Activated naive CD4-positive, alpha-beta T cell treated with anti-CD3 and anti-CD28 coated beads for 36 hours (primary cell): ENCODE measurements at regions of chr1 and their contacts with region 1.

Region 1: GRCh38 chr1:64823691-64824476 is 79.0 kb downstream of the RAVER2 start:
- DNase-seq: peak; percentile 83
- H3K4me3 Mint-ChIP-seq: no peak overlapping the region
- H3K27ac Mint-ChIP-seq: peak overlapping the region; percentile 5
- H3K4me1 Mint-ChIP-seq: peaks cover 33% of the 10 kb centered on the region
- H3K27me3 Mint-ChIP-seq: no peaks in the 10 kb centered on the region

Region 2: DNA sequence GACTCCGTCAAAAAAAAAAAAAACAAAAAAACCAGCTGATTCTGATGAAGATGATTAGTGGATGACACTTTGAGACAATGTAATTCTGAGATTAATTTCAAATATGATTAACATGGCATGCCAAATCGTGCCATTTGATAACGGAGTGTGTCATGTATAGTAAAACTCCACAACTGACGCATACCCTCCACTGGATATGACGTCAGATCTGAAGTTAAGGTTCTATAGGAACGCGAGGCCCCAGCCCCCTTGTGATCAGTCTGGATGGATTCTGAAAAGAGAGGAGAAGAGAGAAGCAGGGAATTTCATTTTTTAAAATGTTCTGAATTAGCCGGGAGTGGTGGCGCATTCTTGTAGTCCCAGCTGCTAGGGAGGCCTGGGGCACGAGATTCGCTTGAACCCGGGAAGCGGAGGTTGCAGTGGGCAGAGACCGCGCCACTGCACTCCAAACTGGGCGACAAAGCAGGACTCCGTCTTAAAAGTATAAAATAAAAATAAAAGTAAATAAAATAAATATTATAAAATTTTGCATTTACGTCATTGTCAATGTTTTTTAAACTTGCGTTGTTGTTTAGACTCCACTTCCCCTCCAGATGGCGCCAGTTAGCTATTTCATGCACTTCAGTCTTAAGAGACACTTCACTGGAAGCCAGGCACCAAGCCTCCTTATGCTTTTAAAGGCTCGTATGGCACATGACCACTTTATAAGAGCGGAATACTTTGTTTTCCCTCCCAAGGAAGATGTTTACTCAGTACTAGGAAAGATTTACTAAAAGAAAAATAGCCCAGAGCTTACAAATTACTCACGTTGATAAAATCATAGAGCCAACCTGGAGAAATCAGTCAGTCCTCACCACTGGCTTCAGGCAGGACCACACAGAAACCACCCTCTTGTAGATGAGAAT is 555.0 kb before region 1 on chr1:
- CTCF ChIA-PET with region 1: interaction called, 6 read pairs
- intact Hi-C with region 1: loop called (anchors 1 kb)
- DNase-seq: peak; percentile 85
- H3K4me3 Mint-ChIP-seq: no peak overlapping the region
- H3K27ac Mint-ChIP-seq: no peak overlapping the region
- H3K4me1 Mint-ChIP-seq: peaks cover 2% of the 10 kb centered on the region
- H3K27me3 Mint-ChIP-seq: peaks cover 15% of the 10 kb centered on the region

Region 3: GRCh38 chr1:64686828-64687724 is 136.8 kb before region 1 on chr1:
- CTCF ChIA-PET with region 1: interaction called, 10 read pairs
- intact Hi-C with region 1: loop called (anchors 1 kb)
- DNase-seq: peak; percentile 39
- H3K4me3 Mint-ChIP-seq: no peak overlapping the region
- H3K27ac Mint-ChIP-seq: no peak overlapping the region
- H3K4me1 Mint-ChIP-seq: peaks cover 5% of the 10 kb centered on the region
- H3K27me3 Mint-ChIP-seq: no peaks in the 10 kb centered on the region

Region 4: GRCh38 chr1:64877151-64877550 is 53.3 kb after region 1 on chr1:
- CTCF ChIA-PET with region 1: no interaction called
- intact Hi-C with region 1: loop called (anchors 1 kb)
- DNase-seq: peak; percentile 68
- H3K4me3 Mint-ChIP-seq: no peak overlapping the region
- H3K27ac Mint-ChIP-seq: peak overlapping the region; percentile 76
- H3K4me1 Mint-ChIP-seq: peaks cover 58% of the 10 kb centered on the region
- H3K27me3 Mint-ChIP-seq: no peaks in the 10 kb centered on the region

Region 5: GRCh38 chr1:65002508-65003315 is 178.8 kb after region 1 on chr1:
- CTCF ChIA-PET with region 1: interaction called, 3 read pairs
- intact Hi-C with region 1: loop called (anchors 1 kb)
- DNase-seq: peak; percentile 81
- H3K4me3 Mint-ChIP-seq: peak overlapping the region; percentile 82
- H3K27ac Mint-ChIP-seq: peak overlapping the region; percentile 88
- H3K4me1 Mint-ChIP-seq: peaks cover 35% of the 10 kb centered on the region
- H3K27me3 Mint-ChIP-seq: no peaks in the 10 kb centered on the region

Region 6: DNA sequence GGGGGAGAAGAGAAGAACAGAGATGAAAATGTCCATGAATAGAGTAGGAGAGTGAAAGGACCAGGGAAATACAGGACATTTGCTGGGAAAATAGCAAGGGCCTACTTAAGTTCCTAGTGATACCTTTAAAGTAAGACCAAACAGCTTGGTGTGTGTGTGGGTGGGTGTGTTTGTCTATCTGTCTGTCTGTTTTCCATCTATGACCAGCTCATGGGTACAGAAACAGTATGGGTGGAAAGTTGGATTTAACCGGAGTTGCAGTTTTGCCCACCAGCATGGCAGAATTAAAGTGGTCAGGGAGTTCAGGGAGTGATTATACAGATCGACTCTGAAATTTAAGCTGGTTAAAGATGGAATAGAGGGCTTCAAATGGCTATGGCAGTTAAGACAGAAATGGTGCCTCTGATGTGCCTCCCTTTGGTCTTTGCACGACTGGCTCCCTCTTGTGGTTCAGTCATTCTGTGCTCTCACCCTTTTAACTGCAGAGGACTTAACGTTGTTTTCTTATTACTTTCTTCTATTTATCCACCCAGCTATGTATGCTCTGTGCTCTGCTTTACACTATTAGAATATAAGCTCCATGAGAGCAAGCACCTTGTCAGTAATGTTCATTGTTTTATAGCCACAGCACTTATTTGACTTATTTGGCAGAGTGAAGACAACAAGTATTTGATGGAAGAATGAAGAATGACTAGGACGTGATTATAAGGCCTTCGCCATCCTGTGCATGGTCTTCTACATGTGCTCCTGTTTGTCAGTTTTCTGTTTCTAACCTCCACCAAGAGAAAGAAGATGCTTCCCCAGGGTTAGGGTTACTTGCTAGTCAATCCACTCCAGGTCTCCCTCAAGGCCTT is 251.5 kb after region 1 on chr1:
- CTCF ChIA-PET with region 1: interaction called, 11 read pairs
- intact Hi-C with region 1: loop called (anchors 1 kb)
- DNase-seq: peak; percentile 84
- H3K4me3 Mint-ChIP-seq: no peak overlapping the region
- H3K27ac Mint-ChIP-seq: no peak overlapping the region
- H3K4me1 Mint-ChIP-seq: peaks cover 20% of the 10 kb centered on the region
- H3K27me3 Mint-ChIP-seq: no peaks in the 10 kb centered on the region

Region 7: DNA sequence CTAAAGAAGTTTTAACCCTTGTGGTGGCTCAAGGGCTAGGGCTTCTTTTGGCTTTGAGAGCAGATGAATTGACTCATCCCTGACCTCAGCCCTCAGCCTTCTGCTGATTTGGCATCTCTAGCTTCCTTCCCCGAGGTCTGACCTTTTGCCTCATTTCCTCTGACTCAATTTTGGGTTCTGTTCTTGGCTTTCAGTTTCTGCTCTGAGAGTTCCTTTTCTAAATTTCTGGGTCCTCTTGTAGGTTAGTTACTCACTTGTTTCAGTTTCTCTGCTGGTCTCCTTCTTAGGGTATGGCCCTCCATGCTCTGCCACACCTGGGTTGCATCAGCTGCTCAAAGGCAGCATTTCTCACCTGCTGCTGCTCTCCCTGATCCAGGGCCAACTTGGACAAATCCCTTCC is 988.2 kb after region 1 on chr1:
- CTCF ChIA-PET with region 1: no interaction called
- intact Hi-C with region 1: loop called (anchors 5 kb)
- DNase-seq: peak; percentile 78
- H3K4me3 Mint-ChIP-seq: no peak overlapping the region
- H3K27ac Mint-ChIP-seq: peak overlapping the region; percentile 36
- H3K4me1 Mint-ChIP-seq: peaks cover 12% of the 10 kb centered on the region
- H3K27me3 Mint-ChIP-seq: peaks cover 31% of the 10 kb centered on the region